Vagina (tissue), 2 donors: ENCODE measurements at regions of chr11 and their contacts with region 1.

Region 1: GRCh38 chr11:26283852-26284408 is 48.0 kb upstream of the ANO3 start:
- DNase-seq: no peak
- H3K4me3 ChIP-seq: no peak overlapping the region
- H3K27ac ChIP-seq: no peak overlapping the region
- H3K4me1 ChIP-seq: no peaks in the 10 kb centered on the region
- H3K27me3 ChIP-seq: no peaks in the 10 kb centered on the region
- CTCF ChIP-seq: no peak
- POLR2A ChIP-seq: no peak

Region 2: DNA sequence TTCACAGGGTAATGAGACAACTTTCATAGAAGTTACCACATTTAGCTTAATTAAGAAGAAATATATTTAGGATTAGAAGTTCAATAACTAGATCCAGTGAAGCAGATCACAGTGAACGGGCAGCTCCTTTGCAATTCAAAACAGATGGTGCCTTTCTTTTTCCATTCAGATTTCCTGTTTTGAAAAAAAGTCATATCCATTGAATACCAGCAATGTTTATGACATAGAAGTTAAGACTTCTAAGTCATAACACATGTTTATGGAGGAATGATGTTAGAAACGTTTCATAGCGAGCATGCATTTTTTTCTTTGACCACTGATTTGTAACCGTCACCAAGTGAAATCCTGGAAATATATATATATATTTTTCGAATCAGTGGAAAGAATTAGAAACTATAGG is 1762.3 kb before region 1 on chr11:
- intact Hi-C with region 1: no loop called
- DNase-seq: no peak
- H3K4me3 ChIP-seq: no peak overlapping the region
- H3K27ac ChIP-seq: no peak overlapping the region
- H3K4me1 ChIP-seq: no peaks in the 10 kb centered on the region
- H3K27me3 ChIP-seq: no peaks in the 10 kb centered on the region
- CTCF ChIP-seq: no peak
- POLR2A ChIP-seq: no peak

Region 3: GRCh38 chr11:24558586-24558985 is 1725.3 kb before region 1 on chr11:
- intact Hi-C with region 1: no loop called
- DNase-seq: no peak
- H3K4me3 ChIP-seq: no peak overlapping the region
- H3K27ac ChIP-seq: no peak overlapping the region
- H3K4me1 ChIP-seq: no peaks in the 10 kb centered on the region
- H3K27me3 ChIP-seq: no peaks in the 10 kb centered on the region
- CTCF ChIP-seq: no peak
- POLR2A ChIP-seq: no peak

Region 4: GRCh38 chr11:26106726-26107125 is 177.2 kb before region 1 on chr11:
- intact Hi-C with region 1: no loop called
- DNase-seq: no peak
- H3K4me3 ChIP-seq: no peak overlapping the region
- H3K27ac ChIP-seq: no peak overlapping the region
- H3K4me1 ChIP-seq: no peaks in the 10 kb centered on the region
- H3K27me3 ChIP-seq: no peaks in the 10 kb centered on the region
- CTCF ChIP-seq: no peak
- POLR2A ChIP-seq: no peak

Region 5: GRCh38 chr11:26227296-26227695 is 56.6 kb before region 1 on chr11:
- intact Hi-C with region 1: loop called (anchors 5 kb)
- DNase-seq: no peak
- H3K4me3 ChIP-seq: no peak overlapping the region
- H3K27ac ChIP-seq: no peak overlapping the region
- H3K4me1 ChIP-seq: no peaks in the 10 kb centered on the region
- H3K27me3 ChIP-seq: no peaks in the 10 kb centered on the region
- CTCF ChIP-seq: peak in 1 of 3 experiments; percentile 47
- POLR2A ChIP-seq: no peak

Region 6: GRCh38 chr11:26741036-26741435 is 457.1 kb after region 1 on chr11:
- intact Hi-C with region 1: no loop called
- DNase-seq: no peak
- H3K4me3 ChIP-seq: no peak overlapping the region
- H3K27ac ChIP-seq: no peak overlapping the region
- H3K4me1 ChIP-seq: peaks cover 6% of the 10 kb centered on the region
- H3K27me3 ChIP-seq: no peaks in the 10 kb centered on the region
- CTCF ChIP-seq: no peak
- POLR2A ChIP-seq: no peak